ENCODE measurements at regions of chr1 and their contacts with region 1.

Region 1: DNA sequence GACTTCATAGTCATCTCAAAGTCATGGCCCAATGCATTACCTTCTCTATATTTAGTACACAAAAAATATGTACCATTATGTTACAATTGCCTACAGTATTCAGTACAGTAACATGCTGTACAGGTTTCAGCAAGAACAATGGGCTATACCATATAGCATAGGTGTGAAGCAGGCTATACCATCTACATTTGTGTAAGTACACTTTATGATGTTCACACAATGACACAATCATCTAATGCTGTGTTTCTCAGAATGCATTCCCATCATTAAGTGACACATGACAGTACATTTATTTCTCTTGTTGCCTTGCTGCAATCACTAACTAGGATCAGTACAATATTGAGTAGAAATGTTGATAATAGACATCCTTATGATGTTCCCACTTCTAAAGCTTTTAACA is 46.5 kb upstream of the NFIA start:
- DNase-seq: no peak
- ATAC-seq: no peak
- H3K4me3 ChIP-seq: no peak overlapping the region
- H3K27ac ChIP-seq: no peak overlapping the region
- H3K4me1 ChIP-seq: no peaks in the 10 kb centered on the region
- H3K27me3 ChIP-seq: no peaks in the 10 kb centered on the region
- CTCF ChIP-seq: no peak
- POLR2A ChIP-seq: no peak

Region 2: DNA sequence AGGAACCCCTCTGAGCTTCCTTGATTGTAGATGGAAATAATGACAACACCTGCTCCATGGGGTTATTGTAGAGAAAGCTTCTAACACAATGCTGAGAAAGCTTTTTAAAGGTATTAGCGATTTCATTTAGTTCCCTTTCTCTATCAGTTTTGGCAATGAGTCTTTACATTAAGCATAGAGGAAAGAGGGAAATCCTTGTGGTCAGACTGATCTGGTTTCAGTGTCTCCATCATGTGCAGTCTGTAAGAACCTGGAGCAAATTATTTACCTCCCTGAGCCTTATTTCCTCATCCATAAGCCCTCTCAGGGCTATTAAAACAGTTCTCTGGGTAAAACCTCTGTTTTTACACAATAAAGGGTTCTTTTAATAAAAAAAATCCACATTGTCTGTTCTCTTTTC is 1651.4 kb before region 1 on chr1:
- in situ Hi-C with region 1: no loop called
- intact Hi-C with region 1: no loop called
- DNase-seq: no peak
- ATAC-seq: no peak
- H3K4me3 ChIP-seq: no peak overlapping the region
- H3K27ac ChIP-seq: no peak overlapping the region
- H3K4me1 ChIP-seq: no peaks in the 10 kb centered on the region
- H3K27me3 ChIP-seq: no peaks in the 10 kb centered on the region
- CTCF ChIP-seq: no peak
- POLR2A ChIP-seq: no peak

Region 3: DNA sequence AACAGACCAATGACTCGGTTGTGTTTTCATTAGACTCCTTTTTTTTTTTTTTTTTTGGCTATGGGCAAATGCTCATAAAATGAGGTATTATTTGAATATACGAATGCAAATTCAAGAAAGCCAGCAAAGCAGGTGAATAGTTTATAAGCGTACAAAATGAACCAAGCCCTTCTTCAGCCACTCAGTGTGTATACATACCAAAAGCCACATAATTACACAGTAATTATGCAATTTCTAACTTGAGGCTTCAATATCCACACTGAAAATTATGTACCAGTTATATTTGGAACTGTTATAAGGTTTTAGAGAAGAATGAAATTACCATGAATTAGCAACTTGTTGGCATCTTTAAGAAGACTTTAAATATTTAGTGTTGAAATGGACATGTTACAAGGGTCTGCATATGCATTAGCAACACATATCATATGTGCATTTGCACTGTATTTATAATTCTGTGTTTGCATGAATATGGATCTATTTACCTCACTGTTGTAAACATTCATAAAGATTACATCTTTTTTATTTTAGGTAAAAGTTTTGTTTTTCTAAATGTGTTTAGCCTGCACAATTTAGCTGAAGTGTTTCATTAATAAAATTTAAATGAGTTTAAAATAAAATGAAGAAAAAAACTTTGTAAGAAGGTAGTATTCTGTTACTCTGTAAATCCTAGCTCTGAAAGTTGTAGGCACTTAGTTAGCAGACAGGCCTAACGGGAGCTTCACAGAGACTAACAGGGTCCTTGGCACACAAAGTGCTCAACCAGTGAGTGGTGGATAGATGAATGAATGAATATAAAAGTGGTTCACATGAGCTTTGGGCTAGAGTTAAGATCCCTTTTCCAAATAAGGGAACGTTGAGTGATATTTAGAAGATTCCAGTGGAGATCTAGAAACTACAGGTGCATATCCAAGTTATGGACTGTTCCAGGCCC is 194.5 kb before region 1 on chr1:
- in situ Hi-C with region 1: loop called in 1 of 4 experiments (anchors 5 kb)
- intact Hi-C with region 1: no loop called
- DNase-seq: no peak
- ATAC-seq: no peak
- H3K4me3 ChIP-seq: no peak overlapping the region
- H3K27ac ChIP-seq: no peak overlapping the region
- H3K4me1 ChIP-seq: no peaks in the 10 kb centered on the region
- H3K27me3 ChIP-seq: no peaks in the 10 kb centered on the region
- CTCF ChIP-seq: no peak
- POLR2A ChIP-seq: no peak

Region 4: DNA sequence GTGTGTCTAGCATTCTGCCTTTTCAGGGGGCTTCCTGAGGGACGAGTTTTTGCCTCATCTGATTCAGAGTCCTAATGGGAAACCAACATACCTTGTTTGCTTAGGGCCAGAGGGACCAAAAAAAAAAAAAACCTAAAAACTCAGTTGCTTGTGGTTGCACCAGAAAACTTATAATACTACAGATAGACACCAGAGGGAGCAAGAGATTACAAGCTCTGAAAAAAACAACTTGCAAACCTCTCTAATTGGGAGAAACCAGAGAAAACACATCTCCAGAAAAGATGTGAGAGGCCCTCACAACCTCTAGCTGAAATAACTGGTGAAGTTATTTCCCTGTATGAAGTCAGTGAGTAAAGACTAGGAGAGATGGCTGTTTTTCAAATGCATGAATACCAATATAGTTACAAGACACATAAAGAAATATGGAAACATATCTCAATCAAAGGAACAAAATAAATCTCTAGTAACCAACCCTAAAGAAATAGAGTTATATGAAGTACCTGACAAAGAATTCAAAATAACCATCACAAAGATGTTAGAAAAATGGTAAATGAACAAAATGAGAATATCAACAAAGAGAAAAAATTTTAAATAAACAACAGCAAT is 187.2 kb before region 1 on chr1:
- in situ Hi-C with region 1: loop called (anchors 5 to 10 kb)
- intact Hi-C with region 1: no loop called
- DNase-seq: no peak
- ATAC-seq: no peak
- H3K4me3 ChIP-seq: no peak overlapping the region
- H3K27ac ChIP-seq: no peak overlapping the region
- H3K4me1 ChIP-seq: no peaks in the 10 kb centered on the region
- H3K27me3 ChIP-seq: no peaks in the 10 kb centered on the region
- CTCF ChIP-seq: peak; percentile 51 to 63 (median 57)
- POLR2A ChIP-seq: no peak

Region 5: GRCh38 chr1:60857851-60858250 is 178.0 kb before region 1 on chr1:
- in situ Hi-C with region 1: loop called in 3 of 4 experiments (anchors 5 to 10 kb)
- intact Hi-C with region 1: no loop called
- DNase-seq: no peak
- ATAC-seq: no peak
- H3K4me3 ChIP-seq: no peak overlapping the region
- H3K27ac ChIP-seq: no peak overlapping the region
- H3K4me1 ChIP-seq: peaks cover 0 to 2% of the 10 kb centered on the region in 2 donors
- H3K27me3 ChIP-seq: no peaks in the 10 kb centered on the region
- CTCF ChIP-seq: no peak
- POLR2A ChIP-seq: no peak

Region 6: DNA sequence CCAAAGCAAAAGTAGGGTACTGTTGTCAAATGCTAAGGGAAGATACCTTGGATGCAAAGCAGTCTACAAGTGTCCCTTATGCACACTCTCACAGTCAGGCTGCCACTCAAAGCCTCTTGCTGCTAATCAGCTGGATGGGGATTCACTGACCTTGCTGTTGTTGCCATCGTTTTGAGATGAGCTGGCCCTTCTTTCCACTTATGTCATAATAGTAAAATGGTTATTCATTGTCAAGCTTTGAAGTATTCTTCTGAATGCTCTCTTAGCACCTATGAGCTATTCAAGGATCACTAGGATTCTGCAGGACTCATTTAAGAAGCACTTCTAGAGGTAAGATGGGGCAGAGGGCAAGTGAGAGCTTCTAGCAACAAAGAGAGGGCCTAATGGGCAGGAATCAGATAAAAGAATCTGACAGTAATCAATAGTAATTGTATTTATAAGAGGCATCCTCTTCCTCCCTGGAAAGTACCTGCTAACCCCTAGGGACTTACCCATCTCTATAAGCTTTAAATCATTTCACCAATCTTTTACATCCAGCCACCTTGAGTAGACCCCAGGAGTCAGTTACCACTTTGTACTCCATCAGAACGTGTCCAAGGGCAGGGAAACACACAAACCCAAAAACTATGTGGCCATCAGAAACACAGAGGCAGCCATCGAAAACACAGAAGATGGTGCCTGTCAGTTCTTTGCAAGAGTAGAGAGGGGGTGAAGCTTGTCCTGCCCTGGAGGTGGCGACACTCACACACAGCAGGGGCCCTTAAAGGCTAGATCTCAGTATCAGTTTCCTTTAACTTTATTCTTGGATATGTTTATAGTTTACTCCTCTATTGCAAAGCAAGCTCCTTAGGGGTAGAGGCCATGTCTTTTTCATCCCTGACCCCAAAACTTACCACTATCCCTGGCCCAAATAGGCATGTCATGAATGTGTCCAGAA is 57.2 kb before region 1 on chr1:
- in situ Hi-C with region 1: loop called in 3 of 4 experiments (anchors 5 to 10 kb)
- intact Hi-C with region 1: no loop called
- DNase-seq: peak; percentile 15 to 39
- ATAC-seq: peak; percentile 82 to 88
- H3K4me3 ChIP-seq: no peak overlapping the region
- H3K27ac ChIP-seq: no peak overlapping the region
- H3K4me1 ChIP-seq: no peaks in the 10 kb centered on the region
- H3K27me3 ChIP-seq: no peaks in the 10 kb centered on the region
- CTCF ChIP-seq: peak in 4 of 5 experiments; percentile 26 to 55 (median 42)
- POLR2A ChIP-seq: no peak

Region 7: GRCh38 chr1:60989749-60990713 is 45.8 kb before region 1 on chr1:
- in situ Hi-C with region 1: loop called in 1 of 4 experiments (anchors 10 kb)
- intact Hi-C with region 1: no loop called
- DNase-seq: peak in 1 of 2 donors; percentile 19
- ATAC-seq: peak in 1 of 2 donors; percentile 37
- H3K4me3 ChIP-seq: no peak overlapping the region
- H3K27ac ChIP-seq: peak overlapping the region in 2 of 4 donors; percentile 24 to 44
- H3K4me1 ChIP-seq: peaks cover 4 to 12% of the 10 kb centered on the region in 2 donors
- H3K27me3 ChIP-seq: no peaks in the 10 kb centered on the region
- CTCF ChIP-seq: no peak
- POLR2A ChIP-seq: no peak